HEK293T (cell line): ENCODE measurements at regions of chr11 and their contacts with region 1.

Region 1: DNA sequence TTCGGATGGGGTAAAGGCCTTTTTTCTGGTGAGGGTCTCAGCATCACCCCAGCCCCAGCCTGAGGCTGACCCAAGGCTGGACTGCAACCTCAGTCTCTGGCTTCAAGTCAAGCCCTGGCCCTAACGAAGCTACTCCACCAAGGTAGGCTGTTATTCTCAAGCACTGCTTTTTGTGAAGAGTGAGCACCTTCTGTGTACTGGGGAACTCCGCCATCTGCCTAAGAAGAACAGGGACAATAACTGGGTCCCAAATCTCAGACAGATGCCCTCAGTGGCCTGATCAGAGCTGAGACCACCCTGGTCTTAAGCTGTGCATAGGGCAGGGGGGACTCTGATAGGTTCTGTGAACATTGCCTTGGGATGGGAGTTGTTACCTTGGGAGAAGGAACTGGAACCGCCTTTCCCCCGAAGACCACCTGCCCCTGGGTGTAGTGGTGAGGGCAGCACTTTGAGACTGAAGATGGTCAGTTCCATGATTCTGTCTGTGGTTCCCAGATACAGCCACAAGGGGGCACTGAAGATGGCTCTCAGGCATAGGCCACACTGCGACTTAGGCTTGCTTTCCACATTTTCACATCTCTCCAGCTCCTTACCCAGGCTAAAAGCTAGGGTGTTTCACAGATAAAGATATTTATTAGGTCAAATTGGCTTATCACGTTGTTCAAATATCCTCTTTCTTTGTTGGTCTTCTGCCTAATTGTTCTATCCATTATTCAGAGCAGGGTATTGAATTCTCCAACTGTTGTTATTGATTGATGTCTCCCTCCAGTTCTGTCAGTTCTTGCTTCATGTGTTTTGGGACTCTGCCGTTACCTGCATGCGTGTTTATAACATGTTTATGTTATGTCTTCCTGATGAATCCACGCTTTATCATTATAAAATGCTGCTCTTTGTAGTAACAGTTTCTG is 11.8 kb upstream of the UVRAG start:
- DNase-seq: peak; percentile 79

Region 2: GRCh38 chr11:75777461-75778110 is 25.6 kb before region 1 on chr11:
- CTCF ChIA-PET with region 1: no interaction called
- POLR2A ChIA-PET with region 1: no interaction called
- DNase-seq: no peak

Region 3: DNA sequence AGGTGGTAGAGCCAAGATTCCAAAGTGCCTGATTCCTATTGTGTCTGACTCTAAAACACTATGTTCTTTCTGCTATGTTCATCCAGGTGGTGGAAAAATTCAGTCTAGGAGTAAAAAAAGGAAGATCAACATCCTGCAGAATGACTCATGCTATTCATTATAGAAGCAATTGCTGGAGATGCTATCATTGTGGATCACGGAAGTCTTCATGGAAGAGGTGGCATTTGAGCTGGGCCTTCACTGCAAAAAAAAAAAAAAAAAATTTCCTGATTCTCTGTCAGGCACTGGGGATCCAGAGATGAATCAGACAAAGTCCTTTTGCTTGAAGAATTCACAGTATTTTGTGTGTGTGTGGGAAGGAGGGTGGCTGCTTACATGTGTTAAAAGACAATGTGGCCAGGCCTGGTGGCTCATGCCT is 10.5 kb after region 1 on chr11:
- CTCF ChIA-PET with region 1: interaction called, 11 read pairs
- POLR2A ChIA-PET with region 1: no interaction called
- DNase-seq: no peak

Region 4: DNA sequence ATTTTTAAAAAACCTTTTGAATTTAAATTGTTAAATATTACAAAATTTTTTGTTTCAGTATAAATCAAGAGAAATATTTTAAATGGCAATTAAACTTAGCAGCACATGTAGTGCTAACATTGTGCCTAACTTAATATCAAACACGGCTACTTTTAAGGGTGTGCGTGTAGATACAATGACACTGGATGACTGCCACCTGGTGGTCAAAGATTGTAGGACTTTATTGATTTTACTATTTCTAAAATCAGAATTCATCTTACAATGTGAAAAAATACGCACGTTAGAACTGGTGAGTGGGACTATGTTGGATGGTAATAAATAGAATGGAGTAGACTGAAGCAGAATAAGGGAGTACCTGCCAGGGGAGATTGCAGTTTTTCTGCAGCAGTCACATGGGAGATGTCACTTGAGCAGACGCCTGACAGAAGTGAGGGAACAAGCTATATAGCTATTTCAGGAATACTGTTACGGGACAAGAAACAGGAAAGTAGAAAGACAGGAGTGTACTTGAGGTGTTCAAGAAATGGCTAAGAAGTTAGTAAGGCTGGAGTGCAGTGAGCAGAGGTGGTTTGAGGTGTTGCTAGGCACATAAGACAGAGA is 64.7 kb after region 1 on chr11:
- CTCF ChIA-PET with region 1: interaction called, 21 read pairs
- POLR2A ChIA-PET with region 1: no interaction called
- DNase-seq: peak; percentile 35